Endothelial cell of umbilical vein (primary cell): ENCODE measurements at regions of chr7 and their contacts with region 1.

Region 1: DNA sequence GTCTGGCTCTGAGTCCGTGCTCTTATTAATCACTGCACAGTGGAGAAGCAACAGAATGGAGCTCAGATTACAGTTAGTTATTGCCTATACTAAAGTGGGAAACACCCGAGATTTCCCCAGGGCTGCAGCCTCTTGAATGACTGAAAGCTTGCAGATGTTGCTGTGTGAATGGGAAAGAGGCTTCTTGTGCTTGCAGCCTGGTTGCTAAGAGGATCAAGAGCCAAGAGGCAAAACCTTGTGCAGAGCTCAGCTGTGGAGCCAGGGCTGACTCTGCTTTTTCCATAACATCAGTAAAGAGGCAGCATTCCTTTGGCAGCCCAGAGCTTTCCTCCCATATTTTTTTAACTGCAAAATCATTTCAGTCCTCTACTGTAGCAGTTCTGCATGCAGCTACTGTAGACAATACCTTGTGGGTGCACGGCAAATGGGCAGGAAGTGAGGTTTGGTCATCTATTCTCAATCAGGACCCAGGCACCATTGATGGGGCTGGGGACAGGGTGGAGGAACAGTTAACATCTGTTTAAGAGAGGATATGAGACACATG is 86.5 kb downstream of the RALA start:
- DNase-seq: peak; percentile 61
- H3K4me3 ChIP-seq: no peak overlapping the region
- H3K27ac ChIP-seq: no peak overlapping the region
- H3K4me1 ChIP-seq: peaks cover 8% of the 10 kb centered on the region
- H3K27me3 ChIP-seq: no peaks in the 10 kb centered on the region
- CTCF ChIP-seq: no peak
- POLR2A ChIP-seq: peak; percentile 64

Region 2: GRCh38 chr7:39602351-39602750 is 107.5 kb before region 1 on chr7:
- CTCF ChIA-PET with region 1: no interaction called
- POLR2A ChIA-PET with region 1: no interaction called
- dilution Hi-C with region 1: no loop called
- intact Hi-C with region 1: no loop called
- DNase-seq: no peak
- H3K4me3 ChIP-seq: no peak overlapping the region
- H3K27ac ChIP-seq: no peak overlapping the region
- H3K4me1 ChIP-seq: peaks cover 34% of the 10 kb centered on the region
- H3K27me3 ChIP-seq: no peaks in the 10 kb centered on the region
- CTCF ChIP-seq: no peak
- POLR2A ChIP-seq: no peak

Region 3: GRCh38 chr7:39732837-39733804 is 23.3 kb after region 1 on chr7:
- CTCF ChIA-PET with region 1: interaction called, 16 read pairs
- POLR2A ChIA-PET with region 1: interaction called, 3 read pairs
- dilution Hi-C with region 1: no loop called
- intact Hi-C with region 1: loop called (anchors 2 kb)
- DNase-seq: peak; percentile 93
- H3K4me3 ChIP-seq: peak overlapping the region; percentile 31 to 46 (median 42)
- H3K27ac ChIP-seq: peak overlapping the region; percentile 84
- H3K4me1 ChIP-seq: peaks cover 23% of the 10 kb centered on the region
- H3K27me3 ChIP-seq: no peaks in the 10 kb centered on the region
- CTCF ChIP-seq: no peak
- POLR2A ChIP-seq: peak; percentile 34